Ovary (tissue), 10 donors: ENCODE measurements at regions of chr1 and their contacts with region 1.

Region 1: GRCh38 chr1:67149179-67149770 is 14.5 kb upstream of the C1orf141 start:
- DNase-seq: peak; percentile 49 to 66 (median 58)
- H3K4me3 ChIP-seq: no peak overlapping the region
- H3K27ac ChIP-seq: no peak overlapping the region
- H3K4me1 ChIP-seq: no peaks in the 10 kb centered on the region
- H3K27me3 ChIP-seq: no peaks in the 10 kb centered on the region
- CTCF ChIP-seq: peak; percentile 47 to 73 (median 70)
- EP300 ChIP-seq: no peak
- POLR2A ChIP-seq: no peak

Region 2: GRCh38 chr1:66996018-66996682 is 153.1 kb before region 1 on chr1:
- intact Hi-C with region 1: loop called in 2 of 4 experiments (anchors 10 kb)
- DNase-seq: peak in 4 of 5 donors; percentile 21 to 66 (median 42)
- H3K4me3 ChIP-seq: no peak overlapping the region
- H3K27ac ChIP-seq: no peak overlapping the region
- H3K4me1 ChIP-seq: no peaks in the 10 kb centered on the region
- H3K27me3 ChIP-seq: no peaks in the 10 kb centered on the region
- CTCF ChIP-seq: peak in 2 of 3 donors; percentile 34 to 36
- EP300 ChIP-seq: no peak
- POLR2A ChIP-seq: no peak

Region 3: DNA sequence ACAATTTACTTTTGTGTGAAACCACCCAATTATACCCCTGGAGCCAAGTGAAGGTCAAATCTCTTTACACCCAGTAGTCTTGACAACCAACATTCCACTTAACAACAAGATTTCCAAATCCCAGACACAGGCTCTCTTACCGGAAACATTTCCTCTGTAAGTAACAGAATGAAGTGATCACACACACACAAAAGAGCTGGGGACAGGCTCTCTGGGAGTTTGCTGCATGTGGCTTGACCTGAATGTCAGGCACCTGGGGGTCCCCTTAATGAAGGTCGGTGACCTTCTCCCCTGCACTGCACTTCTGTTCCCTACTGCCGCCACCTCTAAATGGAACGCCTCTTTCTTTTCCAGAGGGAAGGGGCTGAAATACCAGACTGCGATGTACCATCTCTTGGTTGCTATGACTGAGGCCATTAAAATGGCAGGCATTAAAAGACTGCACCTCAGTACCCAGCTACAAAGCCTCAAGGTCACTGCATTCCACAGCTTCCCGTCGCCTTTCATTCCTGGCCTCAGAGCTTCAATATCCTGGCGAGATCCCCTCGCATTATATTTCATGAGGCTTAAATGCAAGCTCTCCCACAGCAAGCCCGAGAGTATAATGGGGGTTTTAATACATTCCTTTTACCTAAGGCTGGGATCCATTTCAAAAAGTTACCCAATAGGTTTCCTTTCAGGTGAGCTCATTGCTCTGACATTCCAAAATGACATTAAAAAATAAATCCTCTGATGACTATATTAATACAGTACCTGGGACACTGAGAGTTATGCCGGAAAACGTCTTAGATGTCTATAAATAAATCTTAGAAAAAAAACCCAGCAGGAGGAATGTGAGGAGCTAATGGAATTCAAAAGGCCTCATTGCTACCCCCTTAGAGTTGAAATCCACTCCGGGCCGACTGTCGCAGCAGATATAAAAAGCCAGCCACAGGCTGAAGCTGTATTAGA is 992.1 kb after region 1 on chr1:
- intact Hi-C with region 1: no loop called
- DNase-seq: peak in 1 of 5 donors; percentile 36
- H3K4me3 ChIP-seq: no peak overlapping the region
- H3K27ac ChIP-seq: peak overlapping the region in 1 of 2 donors; percentile 50
- H3K4me1 ChIP-seq: peaks cover 21% of the 10 kb centered on the region
- H3K27me3 ChIP-seq: no peaks in the 10 kb centered on the region
- CTCF ChIP-seq: no peak
- EP300 ChIP-seq: no peak
- POLR2A ChIP-seq: no peak